ENCODE measurements at regions of chr7 and their contacts with region 1.

Region 1: GRCh38 chr7:22103255-22103969 is 157.7 kb upstream of the CDCA7L start:
- DNase-seq: peak; percentile 66
- ATAC-seq: peak; percentile 93
- H3K4me3 ChIP-seq: no peak overlapping the region
- H3K27ac ChIP-seq: no peak overlapping the region
- H3K4me1 ChIP-seq: peaks cover 0 to 3% of the 10 kb centered on the region in 2 experiments; a peak in 2 of 4 replicates
- H3K27me3 ChIP-seq: no peaks in the 10 kb centered on the region
- CTCF ChIP-seq: peak; percentile 68 to 87 (median 73)
- POLR2A ChIP-seq: no peak
- RAD21 ChIP-seq: peak; percentile 84

Region 2: GRCh38 chr7:22488643-22489462 is 385.4 kb after region 1 on chr7:
- CTCF ChIA-PET with region 1: interaction called, 4 read pairs
- POLR2A ChIA-PET with region 1: no interaction called
- RAD21 ChIA-PET with region 1: no interaction called
- intact Hi-C with region 1: loop called (anchors 1 kb)
- DNase-seq: peak; percentile 54
- ATAC-seq: peak; percentile 93
- H3K4me3 ChIP-seq: no peak overlapping the region
- H3K27ac ChIP-seq: no peak overlapping the region
- H3K4me1 ChIP-seq: no peaks in the 10 kb centered on the region
- H3K27me3 ChIP-seq: no peaks in the 10 kb centered on the region
- CTCF ChIP-seq: peak; percentile 80 to 94 (median 91)
- POLR2A ChIP-seq: no peak
- RAD21 ChIP-seq: peak; percentile 98

Region 3: GRCh38 chr7:22660732-22661131 is 557.3 kb after region 1 on chr7:
- CTCF ChIA-PET with region 1: no interaction called
- POLR2A ChIA-PET with region 1: no interaction called
- RAD21 ChIA-PET with region 1: no interaction called
- intact Hi-C with region 1: no loop called
- DNase-seq: no peak
- ATAC-seq: peak; percentile 70
- H3K4me3 ChIP-seq: no peak overlapping the region
- H3K27ac ChIP-seq: no peak overlapping the region
- H3K4me1 ChIP-seq: no peaks in the 10 kb centered on the region
- H3K27me3 ChIP-seq: no peaks in the 10 kb centered on the region
- CTCF ChIP-seq: peak in 2 of 3 experiments; percentile 46 to 53; a peak in 4 of 6 replicates
- POLR2A ChIP-seq: no peak
- RAD21 ChIP-seq: no peak

Region 4: GRCh38 chr7:22833113-22833855 is 729.9 kb after region 1 on chr7:
- CTCF ChIA-PET with region 1: no interaction called
- POLR2A ChIA-PET with region 1: no interaction called
- RAD21 ChIA-PET with region 1: no interaction called
- intact Hi-C with region 1: no loop called
- DNase-seq: no peak
- ATAC-seq: no peak
- H3K4me3 ChIP-seq: no peak overlapping the region
- H3K27ac ChIP-seq: no peak overlapping the region
- H3K4me1 ChIP-seq: no peaks in the 10 kb centered on the region
- H3K27me3 ChIP-seq: no peaks in the 10 kb centered on the region
- CTCF ChIP-seq: no peak
- POLR2A ChIP-seq: no peak
- RAD21 ChIP-seq: no peak

Region 5: DNA sequence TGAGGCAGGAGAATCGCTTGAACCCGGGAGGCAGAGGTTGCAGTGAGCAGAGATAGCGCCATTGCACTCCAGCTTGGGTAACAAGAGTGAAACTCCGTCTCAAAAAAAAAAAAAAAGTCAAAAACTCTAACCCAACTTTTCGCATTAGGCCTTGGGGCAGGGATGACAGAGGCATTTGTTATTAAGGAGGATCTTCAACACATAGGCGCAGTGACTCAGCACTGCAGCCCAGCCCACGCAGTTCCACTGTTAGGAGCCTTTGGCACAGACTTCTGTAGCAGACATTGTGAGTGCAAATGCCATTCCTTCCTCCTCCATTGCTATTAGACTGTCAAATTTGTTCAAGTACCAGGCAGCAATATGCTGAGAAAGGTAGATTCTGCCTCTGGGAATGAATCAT is 959.0 kb after region 1 on chr7:
- CTCF ChIA-PET with region 1: no interaction called
- POLR2A ChIA-PET with region 1: no interaction called
- RAD21 ChIA-PET with region 1: no interaction called
- intact Hi-C with region 1: loop called (anchors 10 kb)
- DNase-seq: no peak
- ATAC-seq: no peak
- H3K4me3 ChIP-seq: no peak overlapping the region
- H3K27ac ChIP-seq: no peak overlapping the region
- H3K4me1 ChIP-seq: peaks cover 2 to 4% of the 10 kb centered on the region in 2 experiments; a peak in 3 of 4 replicates
- H3K27me3 ChIP-seq: no peaks in the 10 kb centered on the region
- CTCF ChIP-seq: no peak
- POLR2A ChIP-seq: no peak
- RAD21 ChIP-seq: no peak

Measured in HCT116 (cell line).